ENCODE measurements at regions of chr1 and their contacts with region 1.

Region 1: DNA sequence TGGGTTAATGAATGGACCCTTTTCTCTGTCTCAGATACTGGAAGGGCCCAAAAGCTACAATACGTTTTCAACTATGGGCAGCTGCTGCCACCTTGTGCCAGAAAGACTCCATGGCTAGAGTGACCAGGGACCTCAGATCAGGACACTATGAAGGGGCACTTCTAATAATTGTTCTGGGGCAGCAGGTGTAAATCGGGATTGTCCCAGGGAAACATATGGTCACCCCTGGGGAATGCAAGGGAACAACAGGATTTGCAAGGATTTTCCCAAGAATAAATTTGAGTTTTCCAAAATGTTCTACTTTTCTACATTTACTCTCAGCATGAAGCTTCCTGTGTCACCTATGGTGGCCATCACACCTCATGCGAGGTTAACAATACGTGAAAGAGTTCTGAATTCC is 12.0 kb upstream of the FCAMR start:
- DNase-seq: peak; percentile 30 to 78 (median 63)
- ATAC-seq: peak; percentile 83
- H3K4me3 ChIP-seq: no peak overlapping the region
- H3K4me3 Mint-ChIP-seq: no peak overlapping the region
- H3K27ac ChIP-seq: no peak overlapping the region
- H3K27ac Mint-ChIP-seq: no peak overlapping the region
- H3K4me1 ChIP-seq: no peaks in the 10 kb centered on the region
- H3K4me1 Mint-ChIP-seq: no peaks in the 10 kb centered on the region
- H3K27me3 ChIP-seq: no peaks in the 10 kb centered on the region
- H3K27me3 Mint-ChIP-seq: peaks cover 4% of the 10 kb centered on the region
- CTCF ChIP-seq: peak; percentile 83

Region 2: GRCh38 chr1:206635080-206635977 is 346.9 kb before region 1 on chr1 and contains the start of gene DYRK3:
- CTCF ChIA-PET with region 1: interaction called, 39 read pairs
- POLR2A ChIA-PET with region 1: no interaction called
- intact Hi-C with region 1: loop called in 1 of 2 experiments (anchors 2 kb)
- DNase-seq: peak; percentile 63 to 94 (median 88)
- ATAC-seq: peak; percentile 94
- H3K4me3 ChIP-seq: peak within 1 kb of the TSS; percentile 58 to 79
- H3K4me3 Mint-ChIP-seq: peak within 1 kb of the TSS; percentile 85
- H3K27ac ChIP-seq: peak within 1 kb of the TSS; percentile 9 to 12
- H3K27ac Mint-ChIP-seq: peak within 1 kb of the TSS; percentile 70
- H3K4me1 ChIP-seq: peaks cover 15% of the 10 kb centered on the region
- H3K4me1 Mint-ChIP-seq: peaks cover 16% of the 10 kb centered on the region
- H3K27me3 ChIP-seq: no peaks in the 10 kb centered on the region
- H3K27me3 Mint-ChIP-seq: peaks cover 15% of the 10 kb centered on the region
- CTCF ChIP-seq: no peak
- total RNA-seq, gene DYRK3: 0.94 to 1.4 TPM

Region 3: GRCh38 chr1:206734499-206735142 is 247.6 kb before region 1 on chr1:
- CTCF ChIA-PET with region 1: interaction called, 74 read pairs
- POLR2A ChIA-PET with region 1: interaction called, 6 read pairs
- intact Hi-C with region 1: loop called (anchors 1 to 2 kb)
- DNase-seq: peak; percentile 66 to 87 (median 82)
- ATAC-seq: peak; percentile 57
- H3K4me3 ChIP-seq: no peak overlapping the region
- H3K4me3 Mint-ChIP-seq: no peak overlapping the region
- H3K27ac ChIP-seq: peak overlapping the region in 1 of 2 experiments; percentile 54
- H3K27ac Mint-ChIP-seq: peak overlapping the region; percentile 91
- H3K4me1 ChIP-seq: peaks cover 55% of the 10 kb centered on the region
- H3K4me1 Mint-ChIP-seq: peaks cover 55% of the 10 kb centered on the region
- H3K27me3 ChIP-seq: no peaks in the 10 kb centered on the region
- H3K27me3 Mint-ChIP-seq: no peaks in the 10 kb centered on the region
- CTCF ChIP-seq: peak; percentile 90

Region 4: GRCh38 chr1:206865013-206865671 is 117.1 kb before region 1 on chr1 and contains the start of gene IL20:
- CTCF ChIA-PET with region 1: interaction called, 22 read pairs
- POLR2A ChIA-PET with region 1: no interaction called
- intact Hi-C with region 1: loop called (anchors 1 to 2 kb)
- DNase-seq: peak; percentile 72 to 93 (median 86)
- ATAC-seq: peak; percentile 97
- H3K4me3 ChIP-seq: no peak within 1 kb of the TSS
- H3K4me3 Mint-ChIP-seq: no peak within 1 kb of the TSS
- H3K27ac ChIP-seq: no peak within 1 kb of the TSS
- H3K27ac Mint-ChIP-seq: no peak within 1 kb of the TSS
- H3K4me1 ChIP-seq: peaks cover 7% of the 10 kb centered on the region
- H3K4me1 Mint-ChIP-seq: peaks cover 7% of the 10 kb centered on the region
- H3K27me3 ChIP-seq: no peaks in the 10 kb centered on the region
- H3K27me3 Mint-ChIP-seq: no peaks in the 10 kb centered on the region
- CTCF ChIP-seq: peak; percentile 91
- total RNA-seq, gene IL20: not detected

Region 5: GRCh38 chr1:206935491-206936067 is 46.6 kb before region 1 on chr1:
- CTCF ChIA-PET with region 1: interaction called, 90 read pairs
- POLR2A ChIA-PET with region 1: no interaction called
- intact Hi-C with region 1: loop called in 1 of 2 experiments (anchors 5 kb)
- DNase-seq: peak in 6 of 9 experiments; percentile 41 to 65 (median 52)
- ATAC-seq: peak; percentile 45
- H3K4me3 ChIP-seq: no peak overlapping the region
- H3K4me3 Mint-ChIP-seq: no peak overlapping the region
- H3K27ac ChIP-seq: no peak overlapping the region
- H3K27ac Mint-ChIP-seq: no peak overlapping the region
- H3K4me1 ChIP-seq: peaks cover 20% of the 10 kb centered on the region
- H3K4me1 Mint-ChIP-seq: peaks cover 26% of the 10 kb centered on the region
- H3K27me3 ChIP-seq: no peaks in the 10 kb centered on the region
- H3K27me3 Mint-ChIP-seq: no peaks in the 10 kb centered on the region
- CTCF ChIP-seq: peak; percentile 48

Region 6: DNA sequence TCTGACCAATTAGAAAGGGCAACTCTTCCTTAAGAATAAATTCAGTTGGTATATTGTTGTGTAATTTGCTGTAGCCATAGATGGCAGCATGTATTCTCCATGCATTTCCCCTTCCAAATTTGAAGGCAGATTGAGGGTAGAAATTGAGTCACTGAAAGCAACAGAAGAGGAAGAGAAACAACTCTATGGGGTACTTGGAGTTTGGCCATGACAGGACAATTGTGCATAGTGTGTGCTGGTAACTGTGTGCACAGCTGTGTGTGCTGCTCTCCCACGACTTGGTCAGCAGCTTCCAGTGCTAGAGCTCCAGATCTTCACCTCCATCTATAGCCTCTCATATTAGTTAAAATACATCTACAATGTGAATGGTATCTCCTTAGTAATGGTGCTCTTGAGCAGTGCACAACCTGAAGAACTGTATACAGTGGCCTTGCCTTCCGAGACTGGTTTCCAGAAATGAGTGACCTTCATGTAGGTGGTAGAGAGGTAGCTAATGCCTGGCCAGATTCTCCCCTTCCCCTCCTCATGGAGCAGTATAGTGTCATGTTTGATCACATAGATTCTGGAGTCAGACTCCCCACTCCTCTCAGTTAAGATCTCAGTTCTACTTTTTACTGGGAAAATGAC is 11.1 kb before region 1 on chr1:
- CTCF ChIA-PET with region 1: interaction called, 49 read pairs
- POLR2A ChIA-PET with region 1: interaction called, 8 read pairs
- intact Hi-C with region 1: no loop called
- DNase-seq: no peak
- ATAC-seq: no peak
- H3K4me3 ChIP-seq: no peak overlapping the region
- H3K4me3 Mint-ChIP-seq: no peak overlapping the region
- H3K27ac ChIP-seq: no peak overlapping the region
- H3K27ac Mint-ChIP-seq: no peak overlapping the region
- H3K4me1 ChIP-seq: peaks cover 13% of the 10 kb centered on the region
- H3K4me1 Mint-ChIP-seq: peaks cover 16% of the 10 kb centered on the region
- H3K27me3 ChIP-seq: no peaks in the 10 kb centered on the region
- H3K27me3 Mint-ChIP-seq: no peaks in the 10 kb centered on the region
- CTCF ChIP-seq: no peak

Region 7: DNA sequence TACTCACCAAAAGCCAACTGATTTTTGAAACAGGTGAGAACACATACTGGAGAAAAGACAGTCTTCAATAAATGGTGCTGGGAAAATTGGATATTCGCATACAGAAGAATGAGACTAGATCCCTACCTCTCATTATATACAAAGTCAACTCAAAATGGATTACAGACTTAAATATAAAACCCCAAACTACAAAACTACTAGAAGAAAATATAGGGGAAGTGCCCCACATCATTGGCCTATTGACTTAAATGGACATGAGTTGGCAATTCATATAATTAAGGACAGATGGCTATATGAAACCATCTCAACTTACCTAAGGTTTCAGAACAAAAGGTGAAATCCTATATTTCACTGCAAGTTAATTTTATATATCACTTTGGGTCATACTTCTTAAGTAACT is 181.9 kb after region 1 on chr1:
- CTCF ChIA-PET with region 1: no interaction called
- POLR2A ChIA-PET with region 1: no interaction called
- intact Hi-C with region 1: no loop called
- DNase-seq: no peak
- ATAC-seq: no peak
- H3K4me3 ChIP-seq: no peak overlapping the region
- H3K4me3 Mint-ChIP-seq: no peak overlapping the region
- H3K27ac ChIP-seq: no peak overlapping the region
- H3K27ac Mint-ChIP-seq: no peak overlapping the region
- H3K4me1 ChIP-seq: no peaks in the 10 kb centered on the region
- H3K4me1 Mint-ChIP-seq: no peaks in the 10 kb centered on the region
- H3K27me3 ChIP-seq: peaks cover 0 to 2% of the 10 kb centered on the region in 2 experiments
- H3K27me3 Mint-ChIP-seq: peaks cover 2% of the 10 kb centered on the region
- CTCF ChIP-seq: no peak